Right cardiac atrium (tissue), 5 donors: ENCODE measurements at regions of chr5 and their contacts with region 1.

Region 1: DNA sequence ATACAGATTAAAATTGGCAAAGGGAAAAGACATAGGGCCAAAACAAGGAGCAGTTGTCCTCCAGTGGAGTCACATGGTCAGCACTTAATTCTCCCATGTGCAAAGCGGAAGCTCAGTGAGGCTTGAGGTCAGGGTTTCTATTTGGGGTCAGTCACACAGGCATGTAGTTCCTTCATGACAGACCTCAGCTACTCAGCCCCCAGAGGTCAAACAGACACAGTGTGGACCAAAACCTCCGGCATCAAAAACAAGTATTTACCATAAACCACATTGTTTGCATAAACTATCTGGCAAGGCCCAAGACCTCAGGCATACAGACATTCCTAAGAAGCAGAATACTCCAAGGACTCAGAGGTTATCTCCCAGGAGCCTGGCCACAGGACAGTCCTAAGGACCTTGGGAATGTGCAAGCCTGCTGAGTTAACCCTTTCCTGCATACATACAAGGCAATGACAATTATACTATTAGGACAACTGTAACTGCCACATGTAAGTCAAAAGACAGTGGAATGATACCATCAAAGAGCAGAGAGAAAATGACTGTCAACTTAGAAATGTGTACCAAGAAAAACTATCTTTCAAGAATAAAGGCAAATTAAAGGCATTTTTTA is 28.7 kb upstream of the FNIP1 start:
- DNase-seq: no peak
- ATAC-seq: no peak
- H3K4me3 ChIP-seq: no peak overlapping the region
- H3K27ac ChIP-seq: no peak overlapping the region
- H3K4me1 ChIP-seq: no peaks in the 10 kb centered on the region
- H3K27me3 ChIP-seq: no peaks in the 10 kb centered on the region

Region 2: DNA sequence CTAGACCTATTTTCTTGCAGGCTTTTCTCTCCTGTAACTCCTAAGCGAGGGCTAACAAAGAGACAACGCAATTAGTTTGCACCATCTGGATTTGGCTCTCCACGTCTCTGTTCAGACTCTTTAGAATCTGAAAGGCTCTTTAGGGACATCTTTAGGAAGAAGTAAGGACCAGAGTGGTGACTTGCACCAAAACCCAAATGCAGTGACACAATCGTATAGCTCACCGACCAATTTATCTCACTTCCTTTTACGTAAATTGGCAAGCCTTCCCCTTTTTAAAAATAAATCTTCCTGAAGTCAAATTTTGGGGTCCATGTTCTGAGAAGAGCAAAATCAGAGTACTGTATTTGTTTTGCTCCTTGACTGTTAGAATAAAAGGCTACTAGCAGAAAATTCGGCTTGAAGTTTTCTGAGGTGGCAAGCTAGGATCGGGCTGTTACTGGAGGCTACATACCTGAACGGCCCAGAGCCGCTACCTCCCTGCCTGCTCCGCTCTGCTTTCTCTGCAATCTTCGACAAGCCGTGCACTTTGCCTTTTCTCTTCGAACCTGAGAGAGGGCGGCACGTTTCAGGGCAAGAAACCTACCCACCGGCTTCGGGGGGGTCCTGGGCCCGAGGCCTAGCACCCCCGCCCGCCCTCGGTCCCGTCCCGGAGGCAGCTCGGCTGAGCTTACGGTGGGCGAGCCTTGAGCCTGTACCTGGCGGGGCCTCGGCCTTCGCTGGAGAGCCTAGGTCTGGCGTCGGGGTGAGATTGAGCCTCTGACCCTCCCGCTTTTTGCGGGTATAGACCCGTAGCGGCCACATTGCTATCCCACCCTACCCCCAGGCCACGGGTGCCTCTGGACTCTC is 119.4 kb after region 1 on chr5:
- intact Hi-C with region 1: loop called in 1 of 4 experiments (anchors 10 kb)
- DNase-seq: peak in 1 of 3 donors; percentile 58
- ATAC-seq: no peak
- H3K4me3 ChIP-seq: no peak overlapping the region
- H3K27ac ChIP-seq: no peak overlapping the region
- H3K4me1 ChIP-seq: no peaks in the 10 kb centered on the region
- H3K27me3 ChIP-seq: no peaks in the 10 kb centered on the region

Region 3: GRCh38 chr5:131983244-131983771 is 157.8 kb after region 1 on chr5:
- intact Hi-C with region 1: no loop called
- DNase-seq: no peak
- ATAC-seq: peak; percentile 32 to 34
- H3K4me3 ChIP-seq: no peak overlapping the region
- H3K27ac ChIP-seq: no peak overlapping the region
- H3K4me1 ChIP-seq: no peaks in the 10 kb centered on the region
- H3K27me3 ChIP-seq: no peaks in the 10 kb centered on the region